CD8-positive, alpha-beta memory T cell (primary cell): ENCODE measurements at regions of chr1 and their contacts with region 1.

Region 1: GRCh38 chr1:211323156-211324063 is 3.2 kb upstream of the TRAF5 start:
- DNase-seq: peak; percentile 44 to 77 (median 56)
- H3K4me3 ChIP-seq: no peak overlapping the region
- H3K4me3 Mint-ChIP-seq: peak overlapping the region in 1 of 7 donors; percentile 70
- H3K27ac ChIP-seq: no peak overlapping the region
- H3K27ac Mint-ChIP-seq: peak overlapping the region in 2 of 8 donors; percentile 4 to 25
- H3K4me1 ChIP-seq: peaks cover 14% of the 10 kb centered on the region
- H3K4me1 Mint-ChIP-seq: peaks cover 30 to 51% (median 37%) of the 10 kb centered on the region in 3 donors
- H3K27me3 ChIP-seq: no peaks in the 10 kb centered on the region
- H3K27me3 Mint-ChIP-seq: no peaks in the 10 kb centered on the region

Region 2: DNA sequence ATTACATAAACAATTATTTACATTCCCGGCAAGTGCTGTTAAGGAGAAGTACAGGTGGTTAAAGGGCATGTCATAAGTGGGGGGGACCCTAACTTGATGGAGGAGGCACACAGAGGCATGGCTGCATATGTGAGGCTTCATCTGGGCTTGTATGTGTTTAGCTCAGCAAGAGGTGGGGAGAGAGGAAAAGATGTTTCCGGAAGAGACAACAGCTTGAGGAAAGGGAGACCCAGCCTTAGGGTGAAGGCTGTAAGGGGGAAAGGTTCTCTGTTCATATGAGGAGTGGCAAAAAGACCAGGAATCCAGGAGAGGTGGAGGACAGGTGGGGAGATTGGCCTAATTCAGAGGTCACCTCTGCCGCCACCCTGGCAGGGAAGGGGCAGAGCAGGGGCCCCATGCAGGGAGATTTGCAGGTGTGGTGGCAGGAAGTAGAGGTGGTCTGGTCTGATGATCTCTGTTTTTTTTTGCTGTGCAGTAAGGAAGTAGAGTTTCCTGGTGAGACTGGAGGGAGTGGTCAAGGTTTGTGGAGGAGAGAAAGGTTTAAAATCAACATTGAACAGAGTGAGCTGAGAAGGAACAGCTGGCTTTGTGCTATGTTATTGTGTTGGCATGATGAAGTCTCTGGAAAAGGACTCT is 12.2 kb after region 1 on chr1:
- CTCF ChIA-PET with region 1: interaction called, 33 read pairs
- POLR2A ChIA-PET with region 1: interaction called, 3 read pairs
- DNase-seq: peak in 2 of 5 donors; percentile 37 to 40
- H3K4me3 ChIP-seq: peak overlapping the region; percentile 44
- H3K4me3 Mint-ChIP-seq: peak overlapping the region; percentile 57 to 89 (median 79)
- H3K27ac ChIP-seq: no peak overlapping the region
- H3K27ac Mint-ChIP-seq: peak overlapping the region; percentile 82 to 96 (median 92)
- H3K4me1 ChIP-seq: peaks cover 91% of the 10 kb centered on the region
- H3K4me1 Mint-ChIP-seq: peaks cover 88 to 95% (median 93%) of the 10 kb centered on the region in 3 donors
- H3K27me3 ChIP-seq: no peaks in the 10 kb centered on the region
- H3K27me3 Mint-ChIP-seq: no peaks in the 10 kb centered on the region

Region 3: DNA sequence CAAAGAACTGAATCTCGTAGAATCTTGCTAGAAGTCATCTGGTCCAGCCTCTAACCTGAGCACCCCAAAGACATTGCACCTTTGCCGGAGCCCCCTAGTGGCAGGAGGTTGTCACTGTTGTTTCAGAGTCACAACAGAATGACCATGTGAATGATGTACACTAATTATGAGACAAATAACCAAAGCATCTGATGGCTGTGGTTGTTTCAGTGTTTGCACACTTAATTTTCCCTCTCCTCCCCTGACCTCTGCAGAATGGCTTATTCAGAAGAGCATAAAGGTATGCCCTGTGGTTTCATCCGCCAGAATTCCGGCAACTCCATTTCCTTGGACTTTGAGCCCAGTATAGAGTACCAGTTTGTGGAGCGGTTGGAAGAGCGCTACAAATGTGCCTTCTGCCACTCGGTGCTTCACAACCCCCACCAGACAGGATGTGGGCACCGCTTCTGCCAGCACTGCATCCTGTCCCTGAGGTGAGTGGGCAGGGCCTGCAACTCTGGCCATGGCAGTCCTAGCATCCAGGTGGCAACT is 29.6 kb after region 1 on chr1:
- CTCF ChIA-PET with region 1: interaction called, 13 read pairs
- POLR2A ChIA-PET with region 1: interaction called, 4 read pairs
- DNase-seq: peak; percentile 43 to 74 (median 48)
- H3K4me3 ChIP-seq: peak overlapping the region; percentile 27
- H3K4me3 Mint-ChIP-seq: peak overlapping the region; percentile 70 to 89 (median 83)
- H3K27ac ChIP-seq: no peak overlapping the region
- H3K27ac Mint-ChIP-seq: peak overlapping the region; percentile 86 to 97 (median 96)
- H3K4me1 ChIP-seq: peaks cover 54% of the 10 kb centered on the region
- H3K4me1 Mint-ChIP-seq: peaks cover 62 to 89% (median 81%) of the 10 kb centered on the region in 3 donors
- H3K27me3 ChIP-seq: no peaks in the 10 kb centered on the region
- H3K27me3 Mint-ChIP-seq: no peaks in the 10 kb centered on the region

Region 4: DNA sequence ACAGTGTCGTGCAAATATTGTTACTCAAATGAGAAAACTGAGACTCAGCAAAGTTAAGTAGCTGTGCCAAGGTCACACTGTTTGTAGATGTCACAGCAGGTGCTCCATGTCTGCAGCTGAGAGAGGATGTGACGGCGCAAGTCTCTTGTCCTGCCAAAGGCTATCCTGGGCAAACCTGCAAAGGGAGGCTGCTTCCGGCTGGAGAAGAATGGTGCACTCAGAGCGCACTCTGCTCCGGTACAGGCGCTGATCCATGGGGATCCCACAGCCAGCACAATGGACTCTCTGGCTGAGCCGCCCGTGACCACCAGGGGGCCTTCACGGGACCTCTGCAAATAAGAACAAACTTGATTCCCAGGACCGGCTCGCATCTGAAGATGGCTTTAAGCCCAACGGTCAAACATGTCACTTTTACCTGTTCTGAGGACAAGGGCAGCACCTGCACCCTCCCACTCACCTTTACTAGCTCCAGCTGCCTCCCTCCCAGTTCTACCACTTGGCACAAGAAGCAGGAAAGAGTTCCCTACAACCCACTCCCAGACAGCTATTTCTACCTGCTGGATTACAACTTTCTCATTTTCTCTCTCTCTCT is 146.6 kb after region 1 on chr1:
- CTCF ChIA-PET with region 1: interaction called, 21 read pairs
- POLR2A ChIA-PET with region 1: no interaction called
- DNase-seq: peak in 3 of 5 donors; percentile 12 to 57 (median 17)
- H3K4me3 ChIP-seq: no peak overlapping the region
- H3K4me3 Mint-ChIP-seq: no peak overlapping the region
- H3K27ac ChIP-seq: no peak overlapping the region
- H3K27ac Mint-ChIP-seq: no peak overlapping the region
- H3K4me1 ChIP-seq: no peaks in the 10 kb centered on the region
- H3K4me1 Mint-ChIP-seq: peaks cover 0 to 7% (median 4%) of the 10 kb centered on the region in 3 donors
- H3K27me3 ChIP-seq: no peaks in the 10 kb centered on the region
- H3K27me3 Mint-ChIP-seq: peaks cover 0 to 6% of the 10 kb centered on the region in 2 donors

Region 5: DNA sequence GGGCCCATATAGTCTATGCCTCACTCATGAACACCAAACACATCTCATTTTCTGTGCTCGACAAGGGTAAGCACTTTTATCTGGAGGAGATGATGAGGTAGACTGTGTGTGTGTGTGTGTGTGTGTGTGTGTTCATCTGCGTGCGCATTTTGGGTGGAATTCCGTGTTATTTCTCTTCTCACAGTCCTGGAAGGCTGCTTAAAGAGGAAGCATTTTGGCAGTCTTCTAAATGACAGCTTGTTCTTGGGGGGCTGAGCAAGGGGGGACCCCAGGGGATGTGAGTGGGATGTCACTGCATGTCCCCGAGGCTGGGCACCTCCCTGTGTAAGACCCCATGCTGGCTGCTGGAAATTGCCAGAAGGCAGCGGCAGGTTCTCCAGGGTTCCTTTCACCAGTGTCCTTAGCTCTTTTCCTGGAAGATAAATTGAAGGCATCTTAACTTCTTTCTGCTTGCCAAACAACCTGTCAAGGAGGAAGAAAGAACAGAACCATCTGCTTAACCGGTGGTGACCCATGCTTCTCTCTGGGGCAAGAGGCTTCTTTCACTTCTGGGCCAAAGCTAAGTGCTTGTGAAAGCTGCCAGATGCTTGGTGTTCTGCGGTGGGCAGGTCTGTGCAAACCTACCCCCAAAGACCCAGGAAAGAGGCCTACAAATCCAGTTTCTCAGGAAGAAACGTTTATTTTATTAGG is 178.4 kb after region 1 on chr1:
- CTCF ChIA-PET with region 1: no interaction called
- POLR2A ChIA-PET with region 1: no interaction called
- DNase-seq: no peak
- H3K4me3 ChIP-seq: no peak overlapping the region
- H3K4me3 Mint-ChIP-seq: no peak overlapping the region
- H3K27ac ChIP-seq: no peak overlapping the region
- H3K27ac Mint-ChIP-seq: peak overlapping the region in 1 of 8 donors; percentile 71
- H3K4me1 ChIP-seq: no peaks in the 10 kb centered on the region
- H3K4me1 Mint-ChIP-seq: no peaks in the 10 kb centered on the region
- H3K27me3 ChIP-seq: no peaks in the 10 kb centered on the region
- H3K27me3 Mint-ChIP-seq: peaks cover 10 to 28% of the 10 kb centered on the region in 2 donors

Region 6: GRCh38 chr1:211514030-211514754 is 190.8 kb after region 1 on chr1:
- CTCF ChIA-PET with region 1: interaction called, 17 read pairs
- POLR2A ChIA-PET with region 1: no interaction called
- DNase-seq: peak; percentile 39 to 76 (median 44)
- H3K4me3 ChIP-seq: no peak overlapping the region
- H3K4me3 Mint-ChIP-seq: peak overlapping the region; percentile 55 to 90 (median 73)
- H3K27ac ChIP-seq: no peak overlapping the region
- H3K27ac Mint-ChIP-seq: peak overlapping the region in 2 of 8 donors; percentile 52 to 69
- H3K4me1 ChIP-seq: peaks cover 10% of the 10 kb centered on the region
- H3K4me1 Mint-ChIP-seq: peaks cover 11 to 17% (median 13%) of the 10 kb centered on the region in 3 donors
- H3K27me3 ChIP-seq: no peaks in the 10 kb centered on the region
- H3K27me3 Mint-ChIP-seq: peaks cover 2 to 3% of the 10 kb centered on the region in 2 donors